Left ventricle myocardium superior (tissue), 1 donor: ENCODE measurements at regions of chr9 and their contacts with region 1.

Region 1: DNA sequence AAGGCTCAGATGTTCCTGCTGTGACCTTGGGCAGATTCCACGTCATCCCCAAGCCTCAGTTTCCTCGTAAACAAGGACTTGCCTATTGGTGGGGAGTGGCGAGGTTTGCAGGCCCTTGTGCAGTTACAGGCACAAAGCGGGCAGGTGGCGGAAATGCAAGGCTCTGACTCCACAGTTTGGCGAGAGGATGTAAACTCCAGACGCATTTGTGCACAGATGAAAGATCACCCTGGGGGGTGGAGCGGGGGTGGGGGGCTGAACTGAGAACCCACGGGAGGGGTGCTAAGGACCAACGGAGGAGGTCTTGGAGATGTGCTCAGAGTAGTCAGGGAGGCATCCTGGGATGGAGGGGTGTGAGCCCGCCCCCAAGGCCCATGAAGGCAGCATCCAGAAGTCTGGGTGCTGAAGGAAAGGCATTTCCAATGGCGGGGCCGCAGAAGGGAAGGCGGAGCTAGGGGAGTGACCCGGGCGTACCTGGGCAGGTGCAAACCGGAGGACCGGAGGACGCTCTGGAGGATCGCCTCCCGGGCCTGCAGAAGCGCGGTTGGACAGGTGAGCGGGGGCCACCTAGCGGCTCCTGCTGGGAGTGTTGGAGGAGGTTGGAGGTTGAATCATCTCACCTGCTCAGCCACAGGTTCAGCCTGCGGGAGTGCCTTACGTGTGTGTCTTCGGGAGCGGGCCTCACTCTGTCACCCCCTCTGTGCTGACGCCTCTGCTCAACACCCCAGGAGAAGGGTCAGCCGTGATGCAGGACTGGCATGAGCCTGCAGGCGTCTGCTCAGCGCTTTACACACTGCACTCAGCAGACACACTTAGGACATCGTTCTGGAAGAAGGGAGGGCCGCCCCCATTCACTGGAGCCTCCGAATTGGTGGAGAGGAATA is 1.9 kb upstream of the FIBCD1 start:
- DNase-seq: peak; percentile 82
- ATAC-seq: peak; percentile 85

Region 2: GRCh38 chr9:130701056-130702022 is 239.6 kb before region 1 on chr9:
- intact Hi-C with region 1: loop called (anchors 5 kb)
- DNase-seq: peak; percentile 85
- ATAC-seq: peak; percentile 94

Region 3: DNA sequence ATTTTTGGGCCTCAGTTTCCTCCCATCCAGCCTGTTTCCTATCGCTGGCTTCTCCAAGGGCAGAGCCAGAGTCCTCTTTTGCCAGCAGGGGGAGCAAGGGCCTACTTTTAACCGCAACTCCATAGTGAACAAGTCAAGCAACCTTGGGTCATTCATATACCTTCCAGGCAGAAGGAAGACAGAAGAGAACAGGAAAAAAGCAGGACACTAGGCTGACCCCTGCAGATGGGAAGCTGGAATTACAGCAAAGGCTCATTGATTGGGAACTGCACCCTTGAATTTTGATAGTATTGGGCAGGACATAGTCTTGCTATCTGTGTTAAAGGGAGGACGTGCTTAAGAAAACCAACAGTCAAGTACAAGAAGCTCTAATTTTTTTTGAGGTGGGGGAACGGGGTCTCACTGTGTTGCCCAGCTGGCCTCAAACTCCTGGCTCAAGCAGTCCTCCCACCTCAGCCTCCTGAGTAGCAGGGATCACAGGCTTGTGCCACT is 74.4 kb before region 1 on chr9:
- intact Hi-C with region 1: loop called (anchors 10 kb)
- DNase-seq: peak; percentile 53
- ATAC-seq: peak; percentile 4

Region 4: DNA sequence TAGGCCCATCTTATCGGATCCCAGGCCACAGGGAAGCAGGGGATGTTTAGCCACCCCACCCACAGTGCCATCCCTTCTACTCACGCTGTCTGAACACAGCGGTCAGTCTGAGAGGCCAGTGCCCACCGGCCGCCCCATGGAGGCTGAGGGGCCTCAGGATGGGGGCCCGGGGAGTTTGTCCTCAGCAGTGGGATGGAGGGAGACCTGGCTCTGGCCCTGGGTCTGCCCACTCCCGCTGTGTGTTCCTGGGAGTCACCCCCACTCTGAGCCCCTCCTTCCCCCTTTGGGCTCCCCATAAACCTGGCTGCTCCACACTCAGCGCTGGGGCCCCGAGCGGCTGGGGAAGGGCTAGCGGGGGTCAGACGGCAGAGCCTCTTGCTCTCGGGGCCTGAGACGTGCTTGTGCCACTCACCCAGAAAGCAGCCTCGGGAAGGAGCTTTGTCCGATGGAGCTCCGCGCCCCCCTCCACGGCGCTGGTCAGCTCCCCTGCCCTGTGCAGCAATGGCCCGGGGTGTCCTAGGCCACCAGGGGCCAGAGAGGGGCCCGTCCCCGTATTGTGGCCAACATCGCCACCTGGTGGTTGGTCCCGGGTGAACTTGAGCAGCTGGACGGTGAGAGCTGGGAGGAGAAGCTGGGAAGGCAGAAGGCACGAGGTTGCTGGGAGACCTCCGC is 57.1 kb after region 1 on chr9:
- intact Hi-C with region 1: loop called (anchors 10 kb)
- DNase-seq: peak; percentile 85
- ATAC-seq: peak; percentile 91

Region 5: GRCh38 chr9:131111186-131111853 is 170.4 kb after region 1 on chr9:
- intact Hi-C with region 1: no loop called
- DNase-seq: no peak
- ATAC-seq: no peak